Right ventricle myocardium inferior (tissue), 1 donor: ENCODE measurements at regions of chr22 and their contacts with region 1.

Region 1: DNA sequence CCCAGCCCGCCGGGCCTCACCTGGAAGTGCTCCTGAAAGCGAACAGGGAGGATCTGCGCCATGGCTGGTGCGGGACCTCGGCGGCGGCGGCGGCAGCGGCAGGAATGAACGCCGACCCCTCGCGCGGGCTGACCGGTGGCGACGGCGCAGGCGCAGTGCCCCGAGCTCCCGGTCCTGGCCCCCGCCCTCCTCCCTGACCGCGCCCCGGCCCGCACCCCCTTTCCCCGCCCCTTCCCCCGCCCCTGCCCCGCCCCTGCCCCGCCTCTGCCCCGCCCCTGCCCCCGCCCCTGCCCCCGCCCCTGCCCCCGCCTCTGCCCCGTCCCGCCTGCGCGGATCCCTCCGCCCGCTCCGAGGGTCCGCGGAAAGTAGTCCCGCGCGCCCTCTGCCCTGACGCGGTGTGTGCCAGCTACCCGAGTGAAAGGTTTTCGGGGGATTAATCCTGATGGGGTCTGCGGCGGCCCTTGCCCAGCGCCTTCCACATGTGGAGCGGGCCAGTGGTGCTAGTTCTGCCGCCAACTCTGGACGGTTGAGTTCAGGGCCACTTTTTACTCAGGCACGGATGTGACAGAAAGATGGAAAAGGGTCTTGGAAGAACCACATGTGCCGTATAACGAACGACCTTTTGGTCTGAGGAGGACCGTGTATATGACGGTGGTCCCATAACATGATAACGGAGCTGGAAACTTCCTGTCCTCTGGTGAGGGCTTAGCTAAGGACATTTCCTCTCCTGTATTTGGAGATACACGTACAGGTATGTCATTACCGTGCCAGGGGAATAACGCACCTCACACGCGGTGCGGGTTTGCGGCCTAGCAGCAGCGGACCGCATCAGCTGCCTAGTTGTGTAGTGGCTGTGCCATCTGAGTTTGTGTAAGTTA is at the start of gene CLTCL1:
- DNase-seq: peak; percentile 92
- ATAC-seq: peak; percentile 90
- total RNA-seq, gene CLTCL1: 8.3 TPM

Region 2: DNA sequence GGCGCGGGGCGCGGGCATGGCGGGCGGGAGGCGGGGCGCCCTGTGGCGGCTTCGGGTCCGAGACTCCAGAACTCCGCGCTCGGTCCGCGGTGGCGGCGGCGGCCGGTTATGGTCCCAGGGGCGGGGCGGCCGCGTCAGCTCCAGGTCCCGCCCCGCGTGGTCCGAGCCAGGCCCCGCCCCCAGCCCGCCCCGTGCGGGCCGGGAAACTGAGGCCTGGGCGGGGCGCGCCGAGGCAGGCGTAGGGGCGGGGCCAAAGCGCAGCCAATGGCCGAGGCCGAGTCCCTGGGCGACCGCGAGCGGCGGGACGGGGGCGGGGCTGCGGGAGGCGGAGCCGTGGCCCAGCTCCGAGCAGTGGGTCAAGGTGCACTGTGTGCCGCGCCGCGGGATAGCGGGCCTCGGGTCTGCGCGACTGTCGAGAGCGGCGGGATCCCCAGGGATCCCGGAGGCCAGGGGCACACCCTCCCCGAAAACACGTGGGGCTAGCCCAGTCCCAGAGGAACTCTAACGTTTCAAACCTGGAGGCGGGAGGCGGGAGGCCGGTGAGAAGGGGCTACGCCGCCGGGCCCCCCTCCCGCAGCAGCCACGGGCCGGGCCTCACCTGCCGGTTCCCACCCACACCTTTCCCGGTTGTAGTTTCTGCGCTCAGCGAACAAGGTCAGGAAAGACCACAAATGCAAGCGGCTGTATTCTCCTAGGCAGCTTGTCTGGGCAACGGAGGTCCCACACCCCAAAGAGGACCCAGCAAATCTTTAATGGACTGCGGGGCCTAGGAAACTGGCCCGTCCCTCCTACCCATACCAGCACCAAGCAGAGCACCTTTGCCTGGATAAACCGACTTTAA is 112.9 kb before region 1 on chr22 and contains the start of gene SLC25A1:
- intact Hi-C with region 1: loop called (anchors 2 kb)
- DNase-seq: peak; percentile 96
- ATAC-seq: peak; percentile 94
- total RNA-seq, gene SLC25A1: 28.7 TPM

Region 3: GRCh38 chr22:19218541-19219233 is 73.1 kb before region 1 on chr22:
- intact Hi-C with region 1: loop called (anchors 2 kb)
- DNase-seq: no peak
- ATAC-seq: peak; percentile 83

Region 4: DNA sequence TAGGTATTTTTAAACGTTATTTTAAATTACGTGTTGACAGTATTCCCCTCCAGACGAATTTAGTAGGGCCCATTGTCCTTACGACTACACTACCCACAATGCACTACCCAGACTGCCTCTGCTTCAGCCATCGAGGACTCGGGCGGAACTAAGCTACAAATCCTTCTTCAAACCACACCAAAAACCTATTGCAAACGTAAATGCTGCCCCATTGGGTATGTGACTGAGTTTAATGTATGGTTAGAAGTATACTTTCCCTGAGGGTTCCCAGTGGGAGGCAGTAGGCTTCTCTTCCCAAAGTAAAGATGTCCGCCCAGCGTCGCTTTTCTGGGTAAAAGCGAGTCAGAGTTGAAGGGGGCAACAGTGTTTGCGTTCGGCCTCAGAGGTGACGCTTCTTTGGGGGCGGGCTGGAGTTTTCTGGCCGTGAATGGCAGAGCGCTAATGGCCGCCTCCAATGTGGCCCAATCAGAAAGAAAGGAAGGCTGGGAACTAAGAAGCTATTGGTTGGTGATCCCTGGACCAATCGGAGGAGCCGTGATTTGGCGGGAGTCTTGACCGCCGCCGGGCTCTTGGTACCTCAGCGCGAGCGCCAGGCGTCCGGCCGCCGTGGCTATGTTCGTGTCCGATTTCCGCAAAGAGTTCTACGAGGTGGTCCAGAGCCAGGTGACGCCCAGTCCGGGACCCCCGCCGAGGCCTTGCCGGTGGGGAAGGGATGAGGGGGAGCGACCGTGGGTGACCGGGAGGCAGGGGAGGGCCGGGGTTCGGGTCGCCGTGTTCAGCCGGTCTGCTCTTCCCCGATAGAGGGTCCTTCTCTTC is 187.7 kb after region 1 on chr22 and contains the start of gene CDC45:
- intact Hi-C with region 1: loop called (anchors 5 kb)
- DNase-seq: peak; percentile 97
- ATAC-seq: peak; percentile 97
- total RNA-seq, gene CDC45: 0.76 TPM

Region 5: DNA sequence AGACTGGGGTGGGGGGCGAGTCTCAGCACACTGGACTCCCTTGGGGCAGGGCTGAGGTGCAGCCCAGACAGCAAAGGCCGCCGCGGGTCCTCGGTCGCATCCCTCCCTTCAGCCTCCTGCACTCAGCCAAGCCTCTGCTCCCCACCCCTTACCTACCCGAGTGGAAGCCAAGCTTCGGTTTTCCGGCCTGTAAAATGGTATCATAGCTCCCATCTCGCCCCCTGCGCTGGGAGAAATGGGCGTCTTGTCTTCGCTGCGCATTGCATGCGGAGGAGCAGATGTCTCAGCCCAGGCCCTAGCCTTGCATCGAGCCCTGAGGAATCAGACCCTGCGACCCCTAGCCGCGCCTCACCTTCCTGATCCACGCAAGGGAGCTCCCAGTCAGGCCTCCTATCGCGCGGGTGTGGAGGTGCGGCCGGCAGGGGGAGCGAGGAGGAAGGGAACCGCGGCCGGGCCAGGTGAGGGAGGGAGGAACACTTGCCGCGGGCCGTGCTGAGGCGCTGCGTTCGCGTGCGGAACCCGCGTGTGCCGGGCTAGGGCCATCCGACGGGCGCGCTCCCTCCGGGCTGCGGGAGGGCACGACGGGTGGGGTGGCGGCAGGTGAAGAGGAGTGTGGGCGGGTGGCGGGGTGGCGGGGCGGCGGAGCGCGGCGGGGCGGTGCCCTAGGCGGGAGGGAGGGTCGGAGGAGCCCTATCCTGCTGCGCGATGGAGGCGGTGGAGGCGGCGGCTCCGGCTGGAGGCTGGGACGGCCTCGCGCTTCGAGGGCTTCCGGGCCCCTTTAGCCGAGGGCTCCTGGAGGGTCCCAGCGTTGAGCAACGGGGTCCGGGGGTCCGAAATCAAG is 464.7 kb after region 1 on chr22:
- intact Hi-C with region 1: no loop called
- DNase-seq: peak; percentile 70
- ATAC-seq: peak; percentile 38